Right ventricle myocardium inferior (tissue), 1 donor: ENCODE measurements at regions of chr9 and their contacts with region 1.

Region 1: GRCh38 chr9:35903049-35903448 is 3.0 kb upstream of the HRCT1 start:
- DNase-seq: no peak
- ATAC-seq: no peak

Region 2: DNA sequence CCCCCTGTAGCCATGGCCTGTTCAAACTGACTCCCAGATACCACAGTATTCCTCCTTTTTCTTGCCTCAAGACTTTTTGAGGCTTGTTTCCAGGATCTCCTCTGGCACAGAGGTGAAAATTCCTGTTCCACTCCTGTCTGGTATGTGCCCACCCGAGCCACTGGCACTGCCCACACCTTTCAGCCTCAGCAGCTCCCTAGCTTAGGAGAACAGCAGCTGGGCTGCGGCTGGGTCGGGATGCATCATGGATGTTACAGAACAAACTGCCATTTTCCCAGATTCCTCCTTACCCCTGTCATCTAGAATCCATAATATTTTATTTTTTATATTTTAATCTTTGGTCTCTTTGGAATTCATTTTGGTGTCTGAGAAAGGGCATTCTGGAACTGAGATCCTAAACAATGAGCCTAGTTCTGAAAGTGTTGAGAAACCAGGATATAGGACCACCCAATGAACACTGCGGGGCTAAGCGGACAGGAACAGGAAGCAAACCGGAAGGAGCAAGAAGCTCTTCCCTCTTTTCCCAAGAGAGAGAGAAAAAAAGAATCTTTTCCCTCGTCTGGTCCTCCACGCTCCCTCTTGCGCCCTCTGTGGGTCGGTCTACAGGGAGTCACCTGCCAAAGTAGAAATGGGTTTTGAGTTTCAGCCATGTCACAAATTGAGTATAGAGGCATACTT is 42.4 kb after region 1 on chr9:
- intact Hi-C with region 1: loop called (anchors 1 kb)
- DNase-seq: peak; percentile 92
- ATAC-seq: peak; percentile 89

Region 3: DNA sequence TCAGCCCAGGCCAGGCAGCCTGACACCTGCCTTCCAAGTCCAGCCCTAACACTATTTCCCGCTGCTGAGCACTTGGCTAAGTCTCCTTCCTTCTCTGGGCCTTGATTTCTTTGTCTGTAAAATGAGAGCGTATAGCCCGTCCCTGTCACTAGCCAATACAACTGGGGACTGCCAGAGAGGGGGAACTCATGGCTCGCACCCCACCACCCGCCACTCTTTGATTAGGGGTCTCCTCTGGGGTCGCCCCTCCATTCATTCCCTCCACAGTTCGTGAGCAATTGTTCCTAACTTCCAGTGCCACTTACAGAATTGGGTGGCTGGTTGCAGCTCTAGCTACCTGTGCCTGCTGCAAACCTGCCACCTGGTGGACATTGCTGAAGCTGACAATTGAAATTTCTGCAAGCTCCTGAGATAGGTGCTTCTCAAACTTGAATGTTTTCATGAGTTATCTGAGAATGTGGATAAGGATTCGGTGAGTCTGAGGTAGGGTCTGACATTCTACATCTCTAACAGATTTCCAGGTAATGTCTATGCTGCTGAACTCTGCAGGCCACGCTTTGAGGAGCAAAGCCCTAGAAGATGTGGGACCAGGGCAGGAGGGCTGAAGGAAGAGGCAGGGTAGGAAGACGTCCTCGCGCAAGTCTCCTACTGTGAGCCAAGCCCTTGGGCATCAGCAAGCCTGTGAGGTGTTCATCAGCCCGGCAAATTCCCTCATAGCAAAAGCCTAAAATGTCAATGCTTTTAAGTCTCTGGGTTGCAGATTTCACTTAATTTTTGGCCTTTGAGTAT is 120.4 kb after region 1 on chr9:
- intact Hi-C with region 1: loop called (anchors 1 kb)
- DNase-seq: peak; percentile 51
- ATAC-seq: peak; percentile 34